ENCODE measurements at regions of chr7 and their contacts with region 1.

Region 1: GRCh38 chr7:10889266-10889898 is 84.3 kb upstream of the PHF14 start:
- DNase-seq: peak; percentile 63 to 71 (median 64)
- ATAC-seq: peak; percentile 95
- H3K4me3 ChIP-seq: no peak overlapping the region
- H3K27ac ChIP-seq: no peak overlapping the region
- H3K4me1 ChIP-seq: no peaks in the 10 kb centered on the region
- H3K27me3 ChIP-seq: no peaks in the 10 kb centered on the region
- CTCF ChIP-seq: peak; percentile 73 to 91 (median 84)
- EP300 ChIP-seq: no peak
- POLR2A ChIP-seq: no peak
- RAD21 ChIP-seq: peak; percentile 84 to 93

Region 2: GRCh38 chr7:10474048-10474447 is 415.3 kb before region 1 on chr7:
- CTCF ChIA-PET with region 1: no interaction called
- POLR2A ChIA-PET with region 1: no interaction called
- in situ Hi-C with region 1: no loop called
- intact Hi-C with region 1: loop called (anchors 10 kb)
- DNase-seq: no peak
- ATAC-seq: no peak
- H3K4me3 ChIP-seq: no peak overlapping the region
- H3K27ac ChIP-seq: no peak overlapping the region
- H3K4me1 ChIP-seq: peaks cover 0 to 7% of the 10 kb centered on the region in 2 experiments; a peak in 1 of 5 replicates
- H3K27me3 ChIP-seq: no peaks in the 10 kb centered on the region
- CTCF ChIP-seq: no peak
- EP300 ChIP-seq: no peak
- POLR2A ChIP-seq: no peak
- RAD21 ChIP-seq: no peak

Region 3: DNA sequence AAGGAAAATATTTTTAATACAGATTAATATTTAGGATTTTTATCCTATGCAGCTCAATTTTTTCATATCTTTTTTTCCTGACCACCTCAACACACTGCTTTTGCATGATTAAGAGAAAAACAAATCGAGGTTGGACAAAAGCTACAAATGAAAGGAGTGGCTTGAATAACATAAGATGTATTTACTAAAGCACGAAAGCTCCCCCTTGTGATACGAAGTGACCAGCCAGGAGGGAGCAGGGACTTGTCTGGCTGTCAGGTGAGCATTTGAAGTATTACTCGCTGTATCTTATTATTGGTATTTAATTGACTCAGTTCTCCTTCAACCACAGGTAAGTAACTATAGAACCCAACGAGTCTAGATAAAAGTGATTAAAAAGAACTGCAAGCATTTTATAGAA is 180.9 kb before region 1 on chr7:
- CTCF ChIA-PET with region 1: no interaction called
- POLR2A ChIA-PET with region 1: no interaction called
- in situ Hi-C with region 1: no loop called
- intact Hi-C with region 1: loop called (anchors 5 kb)
- DNase-seq: peak in 2 of 4 experiments; percentile 32 to 73
- ATAC-seq: peak; percentile 85
- H3K4me3 ChIP-seq: no peak overlapping the region
- H3K27ac ChIP-seq: peak overlapping the region; percentile 4; the same call in 1 of the 3 replicates
- H3K4me1 ChIP-seq: peaks cover 0 to 24% of the 10 kb centered on the region in 2 experiments; a peak in 3 of 5 replicates
- H3K27me3 ChIP-seq: no peaks in the 10 kb centered on the region
- CTCF ChIP-seq: peak; percentile 41 to 64 (median 57); a peak in 5 of 6 replicates
- EP300 ChIP-seq: no peak
- POLR2A ChIP-seq: no peak
- RAD21 ChIP-seq: peak; percentile 48 to 63

Region 4: DNA sequence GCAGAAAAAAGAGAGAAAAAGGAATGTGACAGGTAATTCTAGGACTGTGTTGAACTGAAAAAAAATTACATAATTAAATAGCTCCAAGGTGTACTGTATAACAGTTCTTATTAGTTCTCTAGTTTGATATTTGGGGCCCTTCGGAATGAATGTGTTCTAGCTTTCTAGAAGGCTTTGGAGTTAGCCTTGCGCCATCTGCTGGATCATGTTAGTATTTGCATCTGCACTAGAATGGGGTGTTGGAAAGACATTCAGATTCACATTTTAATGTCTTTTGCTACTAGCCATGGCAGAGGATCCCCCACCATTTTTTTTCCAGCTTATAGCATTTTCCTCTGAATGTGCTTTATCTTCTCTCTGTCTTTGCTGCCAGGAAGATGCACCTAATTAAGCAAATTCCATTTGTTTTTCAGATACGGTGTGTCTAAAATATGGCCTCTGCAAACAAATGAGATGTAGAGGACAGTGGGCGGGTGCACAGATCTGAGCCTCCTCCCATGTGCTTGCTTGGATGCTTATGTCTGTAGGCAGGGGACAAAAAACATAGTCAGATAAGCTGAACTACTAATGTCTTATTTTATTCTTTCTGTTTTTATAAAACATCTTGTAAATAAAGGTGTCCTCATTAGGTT is 322.8 kb after region 1 on chr7:
- CTCF ChIA-PET with region 1: no interaction called
- POLR2A ChIA-PET with region 1: no interaction called
- in situ Hi-C with region 1: no loop called
- intact Hi-C with region 1: loop called (anchors 5 kb)
- DNase-seq: peak; percentile 43 to 76 (median 50)
- ATAC-seq: peak; percentile 91
- H3K4me3 ChIP-seq: no peak overlapping the region
- H3K27ac ChIP-seq: no peak overlapping the region
- H3K4me1 ChIP-seq: no peaks in the 10 kb centered on the region
- H3K27me3 ChIP-seq: peaks cover 11 to 15% of the 10 kb centered on the region in 2 experiments
- CTCF ChIP-seq: peak; percentile 61 to 76 (median 75)
- EP300 ChIP-seq: no peak
- POLR2A ChIP-seq: no peak
- RAD21 ChIP-seq: peak; percentile 76 to 85

Measured in K562 (cell line).